Activated T-helper 1 cell treated with anti-CD3 and anti-CD28 coated beads, Interleukin-12 subunit alpha, Interleukin-12 subunit beta, Interleukin-2, Interleukin-4 antibody, amounts not matched to agents 30 ng/mL and 10 ng/mL and 1 ng/mL, durations not matched to agents 14 hours and 24 hours and 36 hours (primary cell): ENCODE measurements at regions of chr13 and their contacts with region 1.

Region 1: DNA sequence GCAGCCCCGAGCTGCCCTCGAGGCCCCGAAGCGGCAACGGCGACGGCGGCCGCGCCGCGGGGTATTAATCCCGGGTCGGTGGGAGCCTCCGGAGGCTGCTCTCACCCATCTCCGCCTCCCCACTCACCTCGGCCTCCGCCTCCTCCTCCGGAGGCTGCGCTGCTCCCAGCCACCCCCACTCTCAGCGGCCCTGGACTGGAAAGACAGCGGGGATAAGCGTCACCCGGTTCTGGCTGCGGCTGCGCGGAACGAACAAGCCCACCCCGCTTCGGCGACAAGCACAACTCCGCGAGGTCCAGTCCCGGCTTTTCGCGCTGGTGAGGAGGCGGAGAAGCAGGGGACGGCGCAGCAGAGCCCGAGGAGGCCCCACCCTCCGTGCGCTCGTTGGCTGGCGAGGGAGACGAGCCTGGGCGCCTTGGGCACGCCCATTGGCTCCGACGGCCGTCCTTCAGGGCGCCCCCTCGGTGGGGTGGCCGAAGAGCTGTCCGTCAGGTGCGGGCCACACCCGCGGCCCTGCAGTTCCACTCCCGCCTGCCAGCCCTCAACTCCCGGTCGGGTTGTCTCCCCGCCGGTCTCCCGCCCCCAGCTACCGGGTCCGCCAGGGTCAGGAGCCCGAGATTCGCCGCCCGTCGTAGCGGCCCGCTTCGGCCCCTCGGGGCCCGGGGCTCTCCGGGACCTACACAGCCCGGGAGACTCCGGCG is at the start of gene ZMYM5:
- DNase-seq: peak; percentile 95
- H3K4me3 Mint-ChIP-seq: peak within 1 kb of the TSS; percentile 99
- H3K27ac Mint-ChIP-seq: peak within 1 kb of the TSS; percentile 97
- H3K4me1 Mint-ChIP-seq: peaks cover 43% of the 10 kb centered on the region
- H3K27me3 Mint-ChIP-seq: peaks cover 3% of the 10 kb centered on the region
- total RNA-seq, gene ZMYM5: 12.2 and 14.2 TPM in 2 replicates

Region 2: GRCh38 chr13:19587635-19588300 is 275.7 kb before region 1 on chr13:
- intact Hi-C with region 1: loop called (anchors 5 kb)
- DNase-seq: peak; percentile 27
- H3K4me3 Mint-ChIP-seq: peak overlapping the region; percentile 78
- H3K27ac Mint-ChIP-seq: peak overlapping the region; percentile 82
- H3K4me1 Mint-ChIP-seq: peaks cover 20% of the 10 kb centered on the region
- H3K27me3 Mint-ChIP-seq: peaks cover 6% of the 10 kb centered on the region

Region 3: DNA sequence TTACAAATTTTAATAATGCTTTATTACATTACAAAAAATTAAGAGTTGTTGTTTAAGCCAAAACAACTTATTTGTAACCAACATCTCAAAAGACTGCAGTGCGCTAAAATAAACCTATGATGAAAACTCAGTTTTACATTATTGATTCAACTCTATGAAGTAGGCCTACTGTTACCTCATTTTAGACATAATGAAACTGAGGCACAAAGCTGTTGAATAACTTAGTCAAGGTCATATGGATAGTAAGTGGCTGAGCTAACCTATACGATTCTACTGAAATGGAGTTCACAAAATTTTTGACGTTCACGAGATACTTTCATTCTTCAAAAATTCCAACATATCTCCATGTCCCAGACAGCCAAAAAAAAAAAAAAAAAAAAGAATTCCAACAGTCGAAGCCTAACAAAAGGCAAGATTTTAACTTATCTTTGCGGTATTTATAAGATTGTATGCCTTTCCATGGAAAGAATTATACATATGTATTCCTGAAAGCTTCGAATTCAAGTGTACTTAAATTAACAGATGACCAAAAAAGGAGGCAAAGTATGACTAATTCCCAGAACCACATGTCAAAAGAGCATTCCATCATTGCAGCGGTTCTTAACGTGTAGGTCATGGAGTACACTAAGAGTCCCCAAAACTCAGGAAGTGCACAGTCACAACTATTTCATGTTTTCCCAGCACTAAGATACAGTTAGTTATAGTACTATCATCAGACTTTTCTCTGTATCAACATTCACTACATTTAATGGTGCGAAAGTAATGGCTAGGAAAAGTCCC is 150.1 kb before region 1 on chr13:
- intact Hi-C with region 1: loop called (anchors 5 kb)
- DNase-seq: no peak
- H3K4me3 Mint-ChIP-seq: no peak overlapping the region
- H3K27ac Mint-ChIP-seq: peak overlapping the region; percentile 61
- H3K4me1 Mint-ChIP-seq: peaks cover 21% of the 10 kb centered on the region
- H3K27me3 Mint-ChIP-seq: no peaks in the 10 kb centered on the region

Region 4: DNA sequence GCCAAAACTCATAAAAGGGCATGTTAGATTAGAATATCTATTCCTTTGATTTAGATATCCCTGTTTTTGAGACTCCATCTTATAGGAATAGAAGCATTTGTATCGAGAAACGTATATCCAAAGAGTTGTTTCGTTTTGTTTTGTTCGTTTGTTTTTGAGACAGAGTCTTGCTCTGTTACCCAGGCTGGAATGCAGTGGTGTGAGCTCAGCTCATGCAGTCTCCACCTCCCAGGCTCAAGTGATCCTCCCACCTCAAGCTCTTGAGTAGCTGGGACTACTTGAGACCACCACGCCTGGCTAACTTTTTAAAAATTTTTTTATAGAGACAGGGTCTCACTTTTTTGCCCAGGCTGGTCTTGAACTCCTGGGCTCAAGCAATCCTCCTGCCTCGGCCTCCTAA is 26.6 kb after region 1 on chr13:
- intact Hi-C with region 1: no loop called
- DNase-seq: no peak
- H3K4me3 Mint-ChIP-seq: no peak overlapping the region
- H3K27ac Mint-ChIP-seq: no peak overlapping the region
- H3K4me1 Mint-ChIP-seq: no peaks in the 10 kb centered on the region
- H3K27me3 Mint-ChIP-seq: peaks cover 2% of the 10 kb centered on the region

Region 5: DNA sequence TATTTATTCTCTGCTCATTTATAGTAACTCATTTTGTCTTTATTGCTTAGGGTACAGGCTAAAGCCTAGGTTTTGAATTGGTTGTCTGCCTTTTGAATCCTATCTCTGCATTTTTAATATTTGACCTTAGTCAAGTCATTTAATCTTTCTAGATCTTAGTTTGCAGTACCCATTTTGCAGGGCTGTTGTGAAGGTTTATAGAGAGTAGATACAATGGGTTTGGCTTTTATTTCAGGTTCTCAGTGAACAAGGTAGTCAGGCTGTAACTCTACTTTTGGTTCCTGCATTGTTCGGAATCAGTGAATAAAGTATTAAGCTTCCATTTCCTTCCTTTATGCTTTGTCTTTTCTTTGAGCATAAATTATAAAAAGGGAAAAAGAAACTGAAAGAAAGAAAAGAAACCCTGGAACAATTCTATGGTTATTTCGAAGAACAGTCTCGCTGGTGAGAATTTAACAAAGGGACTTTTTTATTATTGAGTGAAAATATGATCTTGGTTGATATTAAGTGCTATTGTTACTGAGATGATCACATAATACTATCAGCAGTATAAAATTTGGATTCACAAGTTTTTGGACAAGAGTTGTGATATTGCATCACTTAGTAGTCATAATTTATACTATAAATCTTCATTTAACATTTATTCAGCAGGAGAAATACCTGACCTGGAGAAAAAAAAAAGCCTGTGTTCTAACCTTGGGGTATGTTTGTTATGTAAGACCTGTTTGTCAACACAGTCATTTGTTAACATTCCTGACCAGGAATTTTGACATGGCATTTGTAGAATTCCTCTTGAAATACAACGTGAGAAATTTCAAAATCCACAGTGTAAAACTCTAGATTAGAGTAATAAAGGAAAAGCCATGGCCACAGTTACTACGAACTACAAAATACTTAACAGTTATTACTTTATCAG is 186.3 kb after region 1 on chr13:
- intact Hi-C with region 1: loop called (anchors 10 kb)
- DNase-seq: no peak
- H3K4me3 Mint-ChIP-seq: peak overlapping the region; percentile 30
- H3K27ac Mint-ChIP-seq: no peak overlapping the region
- H3K4me1 Mint-ChIP-seq: peaks cover 22% of the 10 kb centered on the region
- H3K27me3 Mint-ChIP-seq: no peaks in the 10 kb centered on the region

Region 6: GRCh38 chr13:21603531-21604448 is 1740.3 kb after region 1 on chr13 and contains the start of gene MICU2:
- intact Hi-C with region 1: loop called (anchors 5 kb)
- DNase-seq: peak; percentile 94
- H3K4me3 Mint-ChIP-seq: peak within 1 kb of the TSS; percentile 85
- H3K27ac Mint-ChIP-seq: peak within 1 kb of the TSS; percentile 88
- H3K4me1 Mint-ChIP-seq: peaks cover 24% of the 10 kb centered on the region
- H3K27me3 Mint-ChIP-seq: peaks cover 24% of the 10 kb centered on the region
- total RNA-seq, gene MICU2: 32.5 and 33.8 TPM in 2 replicates